CD4-positive, alpha-beta memory T cell (primary cell): ENCODE measurements at regions of chr14 and their contacts with region 1.

Region 1: GRCh38 chr14:35121887-35122695 is at the starts of genes PPP2R3C and PRORP:
- DNase-seq: peak; percentile 93 to 97 (median 95)
- H3K4me3 ChIP-seq: peak within 1 kb of the TSS; percentile 94 to 99
- H3K4me3 Mint-ChIP-seq: peak within 1 kb of the TSS; percentile 97 to 100 (median 98)
- H3K27ac ChIP-seq: peak within 1 kb of the TSS; percentile 99
- H3K27ac Mint-ChIP-seq: peak within 1 kb of the TSS; percentile 99 to 100 (median 100)
- H3K4me1 ChIP-seq: peaks cover 72% of the 10 kb centered on the region
- H3K4me1 Mint-ChIP-seq: peaks cover 42 to 86% (median 64%) of the 10 kb centered on the region in 4 donors
- H3K27me3 ChIP-seq: no peaks in the 10 kb centered on the region
- H3K27me3 Mint-ChIP-seq: no peaks in the 10 kb centered on the region
- total RNA-seq, gene PPP2R3C: 36.1 to 41.0 TPM
- total RNA-seq, gene PRORP: 38.9 to 39.4 TPM

Region 2: DNA sequence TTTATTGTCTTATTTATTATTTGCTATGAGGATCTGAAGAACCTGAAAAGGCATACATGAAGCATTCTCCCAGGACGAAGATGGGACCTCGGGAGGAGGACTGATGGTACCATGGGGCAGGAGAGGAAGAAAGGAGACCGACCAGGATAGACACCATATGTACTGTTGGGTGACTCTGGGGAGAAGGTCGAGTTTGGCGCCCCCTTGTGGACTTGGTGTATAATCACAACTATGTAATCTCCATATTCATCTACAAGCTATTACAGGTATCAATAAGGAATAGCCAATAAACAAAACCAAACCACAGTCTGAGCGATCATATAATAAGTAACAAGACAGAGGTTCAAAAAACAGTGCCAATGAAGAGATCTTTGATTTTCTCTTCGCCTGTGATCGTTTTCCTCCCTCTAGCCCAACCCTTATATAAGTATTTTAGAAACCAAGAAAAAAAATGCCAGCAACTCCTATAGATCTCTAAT is 799.1 kb before region 1 on chr14:
- CTCF ChIA-PET with region 1: no interaction called
- POLR2A ChIA-PET with region 1: no interaction called
- intact Hi-C with region 1: no loop called
- DNase-seq: peak; percentile 50 to 61 (median 60)
- H3K4me3 ChIP-seq: no peak overlapping the region
- H3K4me3 Mint-ChIP-seq: no peak overlapping the region
- H3K27ac ChIP-seq: no peak overlapping the region
- H3K27ac Mint-ChIP-seq: no peak overlapping the region
- H3K4me1 ChIP-seq: no peaks in the 10 kb centered on the region
- H3K4me1 Mint-ChIP-seq: peaks cover 0 to 3% (median under 1%) of the 10 kb centered on the region in 4 donors
- H3K27me3 ChIP-seq: no peaks in the 10 kb centered on the region
- H3K27me3 Mint-ChIP-seq: peaks cover 2 to 9% of the 10 kb centered on the region in 2 donors

Region 3: DNA sequence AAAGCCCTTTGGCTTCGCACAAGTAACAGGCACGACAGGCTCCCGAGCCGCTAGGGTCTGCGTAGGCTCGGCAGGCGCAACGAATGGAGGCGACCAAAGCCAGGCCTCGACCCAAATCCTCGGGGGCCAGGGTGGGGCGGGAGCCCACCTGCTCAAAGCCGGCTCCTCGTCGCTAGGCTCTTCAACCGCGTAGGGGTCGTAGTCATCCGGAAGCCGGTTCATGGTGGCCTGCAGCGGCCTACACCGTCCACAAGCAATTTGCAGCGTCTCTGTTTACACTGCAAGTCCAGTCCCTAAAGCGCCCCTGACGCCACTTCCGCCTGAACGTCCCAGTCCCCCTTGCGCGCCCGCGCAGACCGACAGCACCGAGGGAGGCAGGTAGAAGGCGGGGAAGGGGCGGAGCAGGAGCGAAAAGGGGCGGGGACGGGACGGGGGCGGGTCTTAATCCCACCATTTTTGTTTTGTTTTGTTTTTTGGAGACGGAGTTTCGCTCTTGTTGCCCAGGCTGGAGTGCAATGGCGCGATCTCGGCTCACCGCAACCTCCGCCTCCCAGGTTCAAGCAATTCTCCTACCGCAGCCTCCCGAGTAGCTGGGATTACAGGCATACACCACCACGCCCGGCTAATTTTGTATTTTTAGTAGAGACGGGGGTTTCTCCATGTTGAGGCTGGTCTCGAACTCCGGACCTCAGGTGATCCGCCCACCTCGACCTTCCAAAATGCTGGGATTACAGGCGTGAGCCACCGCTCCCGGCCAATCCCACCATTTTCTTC is 582.5 kb before region 1 on chr14 and contains the start of gene EAPP:
- CTCF ChIA-PET with region 1: no interaction called
- POLR2A ChIA-PET with region 1: interaction called, 4 read pairs
- intact Hi-C with region 1: loop called (anchors 5 kb)
- DNase-seq: peak; percentile 91 to 97 (median 93)
- H3K4me3 ChIP-seq: peak within 1 kb of the TSS; percentile 66 to 94
- H3K4me3 Mint-ChIP-seq: peak within 1 kb of the TSS; percentile 97 to 100 (median 99)
- H3K27ac ChIP-seq: peak within 1 kb of the TSS; percentile 100
- H3K27ac Mint-ChIP-seq: peak within 1 kb of the TSS; percentile 97 to 100 (median 99)
- H3K4me1 ChIP-seq: peaks cover 31% of the 10 kb centered on the region
- H3K4me1 Mint-ChIP-seq: peaks cover 19 to 45% (median 31%) of the 10 kb centered on the region in 4 donors
- H3K27me3 ChIP-seq: no peaks in the 10 kb centered on the region
- H3K27me3 Mint-ChIP-seq: no peaks in the 10 kb centered on the region
- total RNA-seq, gene EAPP: 58.2 to 66.4 TPM

Region 4: DNA sequence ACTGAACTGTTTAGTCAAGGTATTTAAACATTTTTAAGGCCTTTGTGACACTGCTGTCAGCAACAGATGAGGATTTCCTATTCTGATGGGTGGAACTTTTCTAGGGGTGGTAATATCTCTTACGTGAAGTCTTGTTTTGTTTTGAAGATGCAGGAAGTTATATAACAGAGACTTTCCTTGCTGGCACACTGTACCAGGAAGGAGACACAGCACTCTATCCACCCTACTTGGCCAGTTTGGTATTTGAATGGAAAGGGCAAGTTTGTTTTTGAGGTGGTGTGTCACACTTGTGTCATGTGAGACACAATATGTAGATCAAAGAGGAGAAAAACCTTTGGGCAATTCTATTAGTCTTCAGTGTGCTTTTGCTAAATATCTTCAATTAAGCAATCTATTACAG is 190.9 kb before region 1 on chr14:
- CTCF ChIA-PET with region 1: no interaction called
- POLR2A ChIA-PET with region 1: no interaction called
- intact Hi-C with region 1: loop called (anchors 1 kb)
- DNase-seq: peak; percentile 78 to 85 (median 84)
- H3K4me3 ChIP-seq: peak overlapping the region in 1 of 2 donors; percentile 53
- H3K4me3 Mint-ChIP-seq: peak overlapping the region; percentile 42 to 79 (median 50)
- H3K27ac ChIP-seq: peak overlapping the region; percentile 79
- H3K27ac Mint-ChIP-seq: peak overlapping the region; percentile 90 to 100 (median 98)
- H3K4me1 ChIP-seq: peaks cover 34% of the 10 kb centered on the region
- H3K4me1 Mint-ChIP-seq: peaks cover 22 to 37% (median 30%) of the 10 kb centered on the region in 4 donors
- H3K27me3 ChIP-seq: no peaks in the 10 kb centered on the region
- H3K27me3 Mint-ChIP-seq: no peaks in the 10 kb centered on the region

Region 5: GRCh38 chr14:35134328-35135123 is 12.4 kb after region 1 on chr14:
- CTCF ChIA-PET with region 1: interaction called, 11 read pairs
- POLR2A ChIA-PET with region 1: interaction called, 10 read pairs
- intact Hi-C with region 1: no loop called
- DNase-seq: no peak
- H3K4me3 ChIP-seq: no peak overlapping the region
- H3K4me3 Mint-ChIP-seq: no peak overlapping the region
- H3K27ac ChIP-seq: no peak overlapping the region
- H3K27ac Mint-ChIP-seq: peak overlapping the region; percentile 38 to 85 (median 76)
- H3K4me1 ChIP-seq: no peaks in the 10 kb centered on the region
- H3K4me1 Mint-ChIP-seq: peaks cover 26 to 37% (median 30%) of the 10 kb centered on the region in 4 donors
- H3K27me3 ChIP-seq: no peaks in the 10 kb centered on the region
- H3K27me3 Mint-ChIP-seq: no peaks in the 10 kb centered on the region

Region 6: DNA sequence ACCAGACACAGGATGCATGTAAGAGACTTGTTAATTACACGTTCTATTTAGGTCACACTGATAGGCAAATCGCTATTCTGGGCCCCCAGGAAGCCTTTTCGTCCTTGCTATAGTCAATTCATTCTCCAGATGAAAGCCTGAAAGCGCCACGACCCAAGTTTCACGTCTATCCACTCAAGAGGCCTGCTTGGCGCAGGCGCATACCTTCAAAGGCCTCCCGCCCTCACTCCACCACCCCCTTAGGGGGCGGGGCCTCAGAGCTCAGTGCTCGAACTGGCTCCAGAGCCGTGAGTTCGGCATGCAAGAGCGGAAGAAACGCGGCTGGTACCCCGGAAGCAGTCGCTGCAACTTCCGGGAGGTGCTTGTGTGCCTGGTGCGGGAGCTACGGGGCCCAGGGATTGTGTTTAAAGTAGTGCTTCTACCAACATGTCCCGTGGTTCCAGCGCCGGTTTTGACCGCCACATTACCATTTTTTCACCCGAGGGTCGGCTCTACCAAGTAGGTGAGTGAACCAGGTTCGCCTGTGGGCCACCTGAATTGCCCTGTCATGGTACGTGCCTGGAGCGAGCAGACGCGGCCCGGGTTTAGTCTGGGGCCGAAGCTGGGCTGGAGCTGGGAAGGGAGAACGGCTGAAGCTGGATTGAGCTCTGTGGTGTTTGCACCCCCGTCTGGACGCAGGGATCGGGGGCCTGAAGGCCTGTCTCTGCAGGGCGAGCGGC is 170.1 kb after region 1 on chr14 and contains the start of gene PSMA6:
- CTCF ChIA-PET with region 1: interaction called, 3 read pairs
- POLR2A ChIA-PET with region 1: interaction called, 22 read pairs
- intact Hi-C with region 1: loop called (anchors 1 kb)
- DNase-seq: peak; percentile 98 to 100 (median 99)
- H3K4me3 ChIP-seq: peak within 1 kb of the TSS; percentile 77 to 91
- H3K4me3 Mint-ChIP-seq: peak within 1 kb of the TSS; percentile 93 to 99 (median 98)
- H3K27ac ChIP-seq: peak within 1 kb of the TSS; percentile 97
- H3K27ac Mint-ChIP-seq: peak within 1 kb of the TSS; percentile 96 to 99 (median 98)
- H3K4me1 ChIP-seq: peaks cover 48% of the 10 kb centered on the region
- H3K4me1 Mint-ChIP-seq: peaks cover 30 to 65% (median 43%) of the 10 kb centered on the region in 4 donors
- H3K27me3 ChIP-seq: no peaks in the 10 kb centered on the region
- H3K27me3 Mint-ChIP-seq: no peaks in the 10 kb centered on the region
- total RNA-seq, gene PSMA6: 84.6 to 86.2 TPM

Region 7: GRCh38 chr14:35826218-35826951 is 704.3 kb after region 1 on chr14 and contains the start of gene BRMS1L:
- CTCF ChIA-PET with region 1: no interaction called
- POLR2A ChIA-PET with region 1: interaction called, 4 read pairs
- intact Hi-C with region 1: loop called (anchors 1 kb)
- DNase-seq: peak; percentile 95 to 99 (median 96)
- H3K4me3 ChIP-seq: peak within 1 kb of the TSS; percentile 86 to 94
- H3K4me3 Mint-ChIP-seq: peak within 1 kb of the TSS; percentile 88 to 95 (median 93)
- H3K27ac ChIP-seq: peak within 1 kb of the TSS; percentile 88
- H3K27ac Mint-ChIP-seq: peak within 1 kb of the TSS; percentile 86 to 97 (median 95)
- H3K4me1 ChIP-seq: peaks cover 9% of the 10 kb centered on the region
- H3K4me1 Mint-ChIP-seq: peaks cover 17 to 30% (median 23%) of the 10 kb centered on the region in 4 donors
- H3K27me3 ChIP-seq: no peaks in the 10 kb centered on the region
- H3K27me3 Mint-ChIP-seq: no peaks in the 10 kb centered on the region
- total RNA-seq, gene BRMS1L: 5.3 to 9.7 TPM